GM12878 (cell line): ENCODE measurements at regions of chr20 and their contacts with region 1.

Region 1: GRCh38 chr20:38748097-38748860 is at the start of gene ACTR5:
- DNase-seq: peak; percentile 76
- ATAC-seq: peak; percentile 94
- H3K4me3 ChIP-seq: peak within 1 kb of the TSS; percentile 75
- H3K27ac ChIP-seq: peak within 1 kb of the TSS; percentile 71
- H3K4me1 ChIP-seq: peaks cover 8% of the 10 kb centered on the region; the same call in 1 of the 2 replicates
- H3K27me3 ChIP-seq: no peaks in the 10 kb centered on the region
- CTCF ChIP-seq: no peak
- EP300 ChIP-seq: no peak
- POLR2A ChIP-seq: peak; percentile 94
- RAD21 ChIP-seq: no peak
- polyA plus RNA-seq, gene ACTR5: 0.52 to 1.7 TPM

Region 2: GRCh38 chr20:38446441-38447209 is 301.7 kb before region 1 on chr20:
- CTCF ChIA-PET with region 1: interaction called, 5 read pairs
- POLR2A ChIA-PET with region 1: no interaction called
- RAD21 ChIA-PET with region 1: interaction called, 3 read pairs
- SMC1A ChIA-PET with region 1: no interaction called
- in situ Hi-C with region 1: no loop called
- intact Hi-C with region 1: loop called (anchors 5 kb)
- DNase-seq: peak; percentile 56
- ATAC-seq: peak; percentile 95
- H3K4me3 ChIP-seq: peak overlapping the region; percentile 92
- H3K27ac ChIP-seq: peak overlapping the region; percentile 84
- H3K4me1 ChIP-seq: peaks cover 11% of the 10 kb centered on the region
- H3K27me3 ChIP-seq: no peaks in the 10 kb centered on the region
- CTCF ChIP-seq: peak; percentile 89 to 99 (median 90); a peak in 5 of 6 replicates
- EP300 ChIP-seq: 0 out of 4 replicates have a peak, but pooled peaks of 1 of the 2 experiments have one; percentile 37
- POLR2A ChIP-seq: peak; percentile 100
- RAD21 ChIP-seq: peak; percentile 35; the same call in 1 of the 2 replicates

Region 3: GRCh38 chr20:38645980-38646858 is 102.1 kb before region 1 on chr20:
- CTCF ChIA-PET with region 1: interaction called, 138 read pairs
- POLR2A ChIA-PET with region 1: no interaction called
- RAD21 ChIA-PET with region 1: interaction called, 46 read pairs
- SMC1A ChIA-PET with region 1: interaction called, 42 read pairs
- in situ Hi-C with region 1: no loop called
- intact Hi-C with region 1: loop called (anchors 1 kb)
- DNase-seq: peak; percentile 25
- ATAC-seq: peak; percentile 97
- H3K4me3 ChIP-seq: no peak overlapping the region; the same call in 1 of the 2 replicates
- H3K27ac ChIP-seq: no peak overlapping the region
- H3K4me1 ChIP-seq: no peaks in the 10 kb centered on the region; the same call in none of the 2 replicates
- H3K27me3 ChIP-seq: peaks cover 0 to 3% of the 10 kb centered on the region in 2 experiments; a peak in 2 of 4 replicates
- CTCF ChIP-seq: peak; percentile 89 to 97 (median 96)
- EP300 ChIP-seq: no peak
- POLR2A ChIP-seq: no peak
- RAD21 ChIP-seq: peak; percentile 94

Region 4: GRCh38 chr20:38759106-38759505 is 10.8 kb after region 1 on chr20:
- CTCF ChIA-PET with region 1: interaction called, 74 read pairs
- POLR2A ChIA-PET with region 1: interaction called, 5 read pairs
- RAD21 ChIA-PET with region 1: interaction called, 5 read pairs
- SMC1A ChIA-PET with region 1: interaction called, 13 read pairs
- in situ Hi-C with region 1: no loop called
- intact Hi-C with region 1: no loop called
- DNase-seq: no peak
- ATAC-seq: no peak
- H3K4me3 ChIP-seq: no peak overlapping the region
- H3K27ac ChIP-seq: no peak overlapping the region
- H3K4me1 ChIP-seq: no peaks in the 10 kb centered on the region
- H3K27me3 ChIP-seq: no peaks in the 10 kb centered on the region
- CTCF ChIP-seq: no peak
- EP300 ChIP-seq: no peak
- POLR2A ChIP-seq: no peak
- RAD21 ChIP-seq: no peak

Region 5: GRCh38 chr20:38799203-38799602 is 50.9 kb after region 1 on chr20:
- CTCF ChIA-PET with region 1: interaction called, 50 read pairs
- POLR2A ChIA-PET with region 1: no interaction called
- RAD21 ChIA-PET with region 1: no interaction called
- SMC1A ChIA-PET with region 1: interaction called, 4 read pairs
- in situ Hi-C with region 1: no loop called
- intact Hi-C with region 1: no loop called
- DNase-seq: no peak
- ATAC-seq: no peak
- H3K4me3 ChIP-seq: no peak overlapping the region
- H3K27ac ChIP-seq: no peak overlapping the region
- H3K4me1 ChIP-seq: no peaks in the 10 kb centered on the region; the same call in 1 of the 2 replicates
- H3K27me3 ChIP-seq: no peaks in the 10 kb centered on the region
- CTCF ChIP-seq: no peak
- EP300 ChIP-seq: no peak
- POLR2A ChIP-seq: no peak
- RAD21 ChIP-seq: no peak

Region 6: DNA sequence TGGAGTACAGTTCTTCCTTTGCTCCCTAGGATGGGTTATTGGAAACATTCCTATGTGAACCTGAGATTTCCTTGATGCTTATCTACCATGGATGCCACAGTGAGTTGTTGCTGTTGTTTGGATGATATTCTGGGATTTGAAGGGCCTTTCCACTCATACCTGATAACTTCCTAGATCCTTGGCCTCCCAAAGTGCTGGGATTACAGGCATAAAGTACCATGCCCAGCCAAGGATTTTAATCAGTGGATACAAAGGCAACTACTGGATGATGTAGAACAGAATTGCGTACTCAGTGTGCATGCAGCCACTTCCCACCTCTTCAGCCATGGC is 77.3 kb after region 1 on chr20:
- CTCF ChIA-PET with region 1: no interaction called
- POLR2A ChIA-PET with region 1: no interaction called
- RAD21 ChIA-PET with region 1: no interaction called
- SMC1A ChIA-PET with region 1: no interaction called
- in situ Hi-C with region 1: no loop called
- intact Hi-C with region 1: no loop called
- DNase-seq: no peak
- ATAC-seq: no peak
- H3K4me3 ChIP-seq: no peak overlapping the region
- H3K27ac ChIP-seq: no peak overlapping the region
- H3K4me1 ChIP-seq: peaks cover 5% of the 10 kb centered on the region; the same call in 1 of the 2 replicates
- H3K27me3 ChIP-seq: no peaks in the 10 kb centered on the region
- CTCF ChIP-seq: no peak
- EP300 ChIP-seq: no peak
- POLR2A ChIP-seq: no peak; the same call in 1 of the 2 replicates
- RAD21 ChIP-seq: no peak

Region 7: DNA sequence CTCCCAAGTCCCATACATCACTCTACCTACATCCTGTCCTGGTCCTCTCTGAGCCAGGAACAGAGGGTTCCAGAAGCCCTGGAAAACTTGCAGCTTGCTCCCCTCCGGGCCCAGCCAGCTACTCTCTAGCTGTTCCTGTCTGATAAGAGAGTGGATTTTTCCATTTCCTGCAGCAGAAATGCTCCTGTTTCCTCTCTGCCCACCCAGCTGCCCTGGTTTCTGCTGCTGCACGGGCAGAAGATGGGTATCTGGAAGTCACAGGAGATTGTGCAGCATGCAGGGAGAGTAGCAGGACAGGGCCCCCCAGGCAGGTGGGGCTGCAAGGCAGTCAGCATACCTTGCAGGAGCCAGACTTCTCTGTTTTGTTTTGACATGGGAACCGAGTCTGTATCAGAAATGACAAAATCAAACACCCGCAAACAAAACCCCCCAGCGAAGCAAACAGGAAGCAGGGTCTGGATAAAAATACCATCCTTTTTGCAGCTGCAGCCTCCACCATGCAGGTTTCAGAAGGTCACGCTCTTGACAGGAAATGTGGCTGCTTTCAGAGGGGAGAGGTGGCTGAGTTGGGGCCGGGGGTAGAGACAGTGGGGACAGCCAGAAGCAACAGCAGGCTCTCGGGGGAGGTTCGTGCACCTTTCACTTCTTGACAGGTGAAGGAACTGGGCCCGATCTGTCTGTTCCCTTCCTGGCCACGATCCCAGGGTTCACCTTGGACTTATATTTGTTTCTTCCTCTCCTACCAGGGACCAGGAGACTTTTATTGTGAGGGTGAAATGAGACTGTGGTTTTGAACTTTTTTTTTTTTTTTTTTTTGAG is 127.1 kb after region 1 on chr20:
- CTCF ChIA-PET with region 1: interaction called, 8 read pairs
- POLR2A ChIA-PET with region 1: interaction called, 3 read pairs
- RAD21 ChIA-PET with region 1: interaction called, 4 read pairs
- SMC1A ChIA-PET with region 1: interaction called, 10 read pairs
- in situ Hi-C with region 1: no loop called
- intact Hi-C with region 1: no loop called
- DNase-seq: peak; percentile 97
- ATAC-seq: peak; percentile 68
- H3K4me3 ChIP-seq: peak overlapping the region; percentile 44
- H3K27ac ChIP-seq: peak overlapping the region; percentile 96
- H3K4me1 ChIP-seq: peaks cover 80% of the 10 kb centered on the region
- H3K27me3 ChIP-seq: no peaks in the 10 kb centered on the region
- CTCF ChIP-seq: no peak
- EP300 ChIP-seq: peak; percentile 96 to 99
- POLR2A ChIP-seq: peak; percentile 76
- RAD21 ChIP-seq: peak; percentile 14; the same call in 1 of the 2 replicates